Transverse colon (tissue), 4 donors: ENCODE measurements at regions of chr15 and their contacts with region 1.

Region 1: GRCh38 chr15:52256366-52256765 is 39.2 kb downstream of the MYO5C start:
- DNase-seq: peak; percentile 79
- H3K4me3 ChIP-seq: no peak overlapping the region
- H3K27ac ChIP-seq: peak overlapping the region in 1 of 4 donors; percentile 7
- H3K4me1 ChIP-seq: peaks cover 0 to 15% (median 8%) of the 10 kb centered on the region in 4 donors
- H3K27me3 ChIP-seq: no peaks in the 10 kb centered on the region
- CTCF ChIP-seq: peak; percentile 71 to 89 (median 84)
- EP300 ChIP-seq: no peak
- POLR2A ChIP-seq: no peak

Region 2: GRCh38 chr15:51737280-51738017 is 518.9 kb before region 1 on chr15 and contains the start of gene LYSMD2:
- in situ Hi-C with region 1: no loop called
- intact Hi-C with region 1: no loop called
- DNase-seq: peak; percentile 79
- H3K4me3 ChIP-seq: peak within 1 kb of the TSS; percentile 58 to 90 (median 64)
- H3K27ac ChIP-seq: peak within 1 kb of the TSS; percentile 87 to 96 (median 91)
- H3K4me1 ChIP-seq: peaks cover under 1 to 37% (median 18%) of the 10 kb centered on the region in 4 donors
- H3K27me3 ChIP-seq: no peaks in the 10 kb centered on the region
- CTCF ChIP-seq: no peak
- EP300 ChIP-seq: no peak
- POLR2A ChIP-seq: peak; percentile 30
- total RNA-seq, gene LYSMD2: 2.2 to 9.2 (median 4.4) TPM

Region 3: GRCh38 chr15:52730173-52730572 is 473.8 kb after region 1 on chr15:
- in situ Hi-C with region 1: loop called in 3 of 4 experiments (anchors 5 to 25 kb)
- intact Hi-C with region 1: loop called (anchors 5 kb)
- DNase-seq: no peak
- H3K4me3 ChIP-seq: no peak overlapping the region
- H3K27ac ChIP-seq: peak overlapping the region in 1 of 4 donors; percentile 7
- H3K4me1 ChIP-seq: peaks cover 0 to 13% (median 5%) of the 10 kb centered on the region in 4 donors
- H3K27me3 ChIP-seq: no peaks in the 10 kb centered on the region
- CTCF ChIP-seq: no peak
- EP300 ChIP-seq: no peak
- POLR2A ChIP-seq: no peak